ENCODE measurements at regions of chr21 and their contacts with region 1.

Region 1: DNA sequence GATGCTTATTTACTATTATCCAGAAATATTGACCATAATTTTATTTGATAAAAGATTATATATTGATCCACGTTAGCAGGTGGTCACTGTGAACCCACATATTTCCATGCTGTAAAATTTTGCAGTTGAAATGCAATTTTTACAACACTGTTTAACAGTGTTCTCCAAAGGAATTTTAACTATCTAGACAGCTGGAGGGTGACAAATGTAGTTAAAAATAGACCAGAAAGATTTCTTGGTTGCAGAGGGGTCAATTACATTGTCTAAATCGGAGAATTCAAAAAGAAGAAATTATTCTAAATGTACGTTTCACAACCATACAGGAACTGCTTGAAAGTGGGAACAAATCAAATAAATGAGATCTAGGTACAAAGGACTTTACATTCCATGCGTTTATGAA is 625.2 kb upstream of the NCAM2 start:
- DNase-seq: no peak
- ATAC-seq: no peak
- H3K4me3 ChIP-seq: no peak overlapping the region
- H3K27ac ChIP-seq: no peak overlapping the region
- H3K4me1 ChIP-seq: no peaks in the 10 kb centered on the region
- H3K27me3 ChIP-seq: no peaks in the 10 kb centered on the region
- CTCF ChIP-seq: no peak
- EP300 ChIP-seq: no peak
- POLR2A ChIP-seq: no peak
- RAD21 ChIP-seq: no peak

Region 2: GRCh38 chr21:20445971-20446370 is 72.9 kb after region 1 on chr21:
- CTCF ChIA-PET with region 1: no interaction called
- POLR2A ChIA-PET with region 1: no interaction called
- in situ Hi-C with region 1: no loop called
- intact Hi-C with region 1: loop called (anchors 2 kb)
- DNase-seq: no peak
- ATAC-seq: no peak
- H3K4me3 ChIP-seq: no peak overlapping the region
- H3K27ac ChIP-seq: no peak overlapping the region
- H3K4me1 ChIP-seq: no peaks in the 10 kb centered on the region
- H3K27me3 ChIP-seq: no peaks in the 10 kb centered on the region
- CTCF ChIP-seq: no peak
- EP300 ChIP-seq: no peak
- POLR2A ChIP-seq: no peak
- RAD21 ChIP-seq: no peak

Measured in K562 (cell line).